ENCODE measurements at regions of chr18 and their contacts with region 1.

Region 1: DNA sequence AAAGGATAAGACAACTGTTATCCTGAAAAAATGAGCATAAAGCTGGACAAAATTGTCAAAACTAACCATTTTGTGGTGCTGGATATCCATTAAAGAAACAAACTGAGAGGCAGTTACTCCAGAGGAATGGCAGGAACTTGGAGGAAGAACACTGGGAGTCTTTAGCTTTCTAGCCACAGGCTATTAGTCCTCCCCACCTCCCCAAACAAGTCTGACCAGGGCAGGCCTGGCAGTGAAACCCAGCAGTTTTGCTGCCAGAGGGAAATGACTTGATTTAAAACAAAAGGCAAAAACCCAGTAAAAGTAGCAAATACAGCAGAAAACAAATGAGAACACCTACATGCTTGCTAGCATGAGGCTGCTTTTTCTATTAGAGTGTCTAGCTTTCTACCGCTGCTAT is 34.9 kb downstream of the OSBPL1A start:
- DNase-seq: peak; percentile 6
- ATAC-seq: peak; percentile 66
- H3K4me3 ChIP-seq: no peak overlapping the region
- H3K27ac ChIP-seq: no peak overlapping the region
- H3K4me1 ChIP-seq: 0 out of 2 replicates have a peak, but pooled peaks cover 1% of the 10 kb centered on the region
- H3K27me3 ChIP-seq: no peaks in the 10 kb centered on the region
- CTCF ChIP-seq: no peak
- POLR2A ChIP-seq: no peak
- RAD21 ChIP-seq: no peak

Region 2: DNA sequence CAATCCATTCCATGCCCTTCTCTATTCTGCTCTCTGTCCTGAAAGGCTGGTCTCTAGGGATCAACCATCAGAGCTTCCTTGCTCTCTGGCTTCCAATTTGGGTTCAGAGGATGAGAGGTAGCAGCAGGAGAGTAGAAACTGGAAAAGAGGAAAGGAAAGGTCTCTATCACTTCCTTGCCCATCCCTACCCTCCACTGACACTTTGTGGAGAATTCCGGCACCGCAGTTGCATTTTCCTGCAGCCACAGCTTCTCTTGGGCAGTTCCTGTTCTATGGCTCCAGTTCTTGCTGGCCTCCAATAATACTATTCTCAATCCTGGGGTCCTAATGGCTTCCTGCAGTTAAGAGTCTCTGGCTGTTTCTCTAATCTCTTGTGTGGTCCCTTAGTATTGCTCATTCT is 50.4 kb after region 1 on chr18:
- CTCF ChIA-PET with region 1: interaction called, 3 read pairs
- POLR2A ChIA-PET with region 1: no interaction called
- dilution Hi-C with region 1: no loop called
- in situ Hi-C with region 1: no loop called
- intact Hi-C with region 1: loop called (anchors 1 kb)
- DNase-seq: no peak
- ATAC-seq: peak; percentile 71
- H3K4me3 ChIP-seq: no peak overlapping the region
- H3K27ac ChIP-seq: no peak overlapping the region
- H3K4me1 ChIP-seq: no peaks in the 10 kb centered on the region
- H3K27me3 ChIP-seq: peaks cover 15% of the 10 kb centered on the region
- CTCF ChIP-seq: peak; percentile 45
- POLR2A ChIP-seq: no peak
- RAD21 ChIP-seq: peak; percentile 54; the same call in 1 of the 2 replicates

Measured in IMR-90 (cell line).